ENCODE measurements at regions of chr2 and their contacts with region 1.

Region 1: DNA sequence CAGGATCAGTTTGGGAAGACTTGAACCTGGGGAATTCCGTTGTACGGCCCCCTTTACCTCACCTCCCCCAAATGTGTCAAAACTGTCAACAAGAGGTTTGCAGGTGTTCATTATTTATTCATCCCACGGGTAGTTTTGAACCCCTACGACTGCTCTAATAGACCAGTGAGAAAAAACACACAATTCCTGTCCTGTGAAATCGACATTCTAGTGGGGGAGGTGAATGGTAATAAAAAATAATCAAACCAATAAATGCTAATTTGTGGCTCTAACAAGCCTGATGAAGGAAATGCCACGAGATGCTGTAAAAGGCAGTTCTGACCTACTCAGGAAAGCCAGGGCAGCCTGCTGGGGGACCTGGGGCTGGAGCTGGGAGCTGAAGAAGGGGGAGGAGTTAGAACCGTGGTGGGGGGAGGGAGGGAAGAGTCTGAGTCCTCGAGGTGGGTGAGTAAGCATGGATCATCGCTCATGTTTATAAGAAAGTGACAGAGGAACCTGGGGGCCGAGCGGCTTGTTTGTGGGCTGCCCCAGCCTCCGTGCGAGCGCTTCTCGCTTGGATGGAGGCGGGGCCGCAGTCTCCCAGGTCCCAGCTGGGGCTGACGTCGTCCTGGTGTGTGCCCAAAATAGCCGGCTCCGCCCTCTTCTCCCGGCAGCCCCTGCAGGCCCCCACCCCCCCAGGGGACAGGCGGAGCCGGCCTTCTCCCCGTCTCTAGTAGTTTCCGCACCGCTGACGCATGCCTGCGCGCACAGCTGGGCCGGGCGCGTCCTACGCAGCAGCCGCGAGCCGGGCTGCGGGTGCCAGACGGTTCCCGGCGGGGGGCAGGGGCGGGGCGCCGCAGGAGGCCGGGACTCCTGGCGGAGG is at the start of gene DNAJB2:
- DNase-seq: peak; percentile 99
- ATAC-seq: peak; percentile 78
- H3K4me3 Mint-ChIP-seq: peak within 1 kb of the TSS; percentile 89
- H3K27ac Mint-ChIP-seq: peak within 1 kb of the TSS; percentile 97
- H3K4me1 Mint-ChIP-seq: peaks cover 49% of the 10 kb centered on the region
- H3K27me3 Mint-ChIP-seq: no peaks in the 10 kb centered on the region
- CTCF ChIP-seq: no peak
- total RNA-seq, gene DNAJB2: 59.0 and 71.1 TPM in 2 replicates

Region 2: GRCh38 chr2:218710687-218711549 is 568.0 kb before region 1 on chr2 and contains the start of gene TTLL4:
- CTCF ChIA-PET with region 1: no interaction called
- POLR2A ChIA-PET with region 1: no interaction called
- intact Hi-C with region 1: loop called (anchors 2 kb)
- DNase-seq: peak; percentile 98
- ATAC-seq: peak; percentile 97
- H3K4me3 Mint-ChIP-seq: peak within 1 kb of the TSS; percentile 91
- H3K27ac Mint-ChIP-seq: peak within 1 kb of the TSS; percentile 86
- H3K4me1 Mint-ChIP-seq: peaks cover 26% of the 10 kb centered on the region
- H3K27me3 Mint-ChIP-seq: no peaks in the 10 kb centered on the region
- CTCF ChIP-seq: no peak
- total RNA-seq, gene TTLL4: 36.0 and 37.2 TPM in 2 replicates

Region 3: DNA sequence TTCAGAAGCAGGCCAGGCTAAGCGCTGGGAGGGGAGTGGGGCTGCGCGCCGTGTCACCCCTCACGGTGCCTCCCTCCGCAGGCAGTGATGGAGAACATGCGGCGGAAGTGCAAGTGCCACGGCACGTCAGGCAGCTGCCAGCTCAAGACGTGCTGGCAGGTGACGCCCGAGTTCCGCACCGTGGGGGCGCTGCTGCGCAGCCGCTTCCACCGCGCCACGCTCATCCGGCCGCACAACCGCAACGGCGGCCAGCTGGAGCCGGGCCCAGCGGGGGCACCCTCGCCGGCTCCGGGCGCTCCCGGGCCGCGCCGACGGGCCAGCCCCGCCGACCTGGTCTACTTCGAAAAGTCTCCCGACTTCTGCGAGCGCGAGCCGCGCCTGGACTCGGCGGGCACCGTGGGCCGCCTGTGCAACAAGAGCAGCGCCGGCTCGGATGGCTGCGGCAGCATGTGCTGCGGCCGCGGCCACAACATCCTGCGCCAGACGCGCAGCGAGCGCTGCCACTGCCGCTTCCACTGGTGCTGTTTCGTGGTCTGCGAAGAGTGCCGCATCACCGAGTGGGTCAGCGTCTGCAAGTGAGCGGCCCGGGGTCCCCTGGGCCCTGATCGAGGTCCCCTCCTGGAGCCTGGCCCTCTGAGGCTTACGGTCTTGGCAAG is 386.1 kb before region 1 on chr2:
- CTCF ChIA-PET with region 1: no interaction called
- POLR2A ChIA-PET with region 1: interaction called, 7 read pairs
- intact Hi-C with region 1: loop called (anchors 1 kb)
- DNase-seq: peak; percentile 91
- ATAC-seq: peak; percentile 66
- H3K4me3 Mint-ChIP-seq: peak overlapping the region; percentile 80
- H3K27ac Mint-ChIP-seq: peak overlapping the region; percentile 92
- H3K4me1 Mint-ChIP-seq: peaks cover 59% of the 10 kb centered on the region
- H3K27me3 Mint-ChIP-seq: no peaks in the 10 kb centered on the region
- CTCF ChIP-seq: no peak

Region 4: DNA sequence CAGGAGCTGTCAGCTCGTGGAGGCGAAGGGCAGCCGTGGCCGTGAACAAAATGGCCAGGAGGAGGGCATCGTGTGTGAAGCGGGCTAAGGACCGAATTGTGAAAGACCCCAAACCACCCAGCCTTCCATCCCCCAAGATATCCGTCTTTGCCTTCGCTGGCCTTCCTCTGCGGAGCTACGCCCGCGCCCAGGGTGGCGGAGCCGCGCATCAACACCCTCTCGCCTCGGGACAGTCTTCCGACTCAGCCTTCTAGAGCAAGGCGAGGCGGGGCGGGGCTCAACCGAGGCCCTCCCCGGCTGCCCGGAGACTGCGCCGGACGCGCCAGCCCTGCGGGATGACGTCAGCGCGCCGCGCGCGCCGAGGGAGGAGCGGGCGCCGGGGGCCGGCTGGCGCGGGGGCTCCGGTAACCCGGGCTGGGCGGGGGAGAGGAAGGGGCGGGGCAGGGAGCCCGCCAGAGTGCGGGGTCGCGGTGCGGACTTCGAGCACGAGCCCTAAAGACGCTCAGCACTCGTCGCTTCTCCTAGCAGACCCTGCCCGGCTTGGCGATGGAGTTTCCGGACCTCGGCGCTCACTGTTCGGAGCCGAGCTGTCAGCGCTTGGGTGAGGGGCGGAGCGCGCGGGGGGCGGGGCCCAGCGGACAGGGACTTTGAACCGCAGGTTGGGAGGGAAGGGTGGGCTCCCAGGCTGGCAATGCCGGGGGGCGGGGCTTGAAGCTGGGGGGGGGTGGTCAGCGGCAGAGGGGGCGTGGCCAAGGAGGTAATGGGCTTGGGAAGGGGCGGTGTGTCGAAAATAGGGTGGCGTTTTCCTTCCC is 72.2 kb before region 1 on chr2 and contains the start of gene ZFAND2B:
- CTCF ChIA-PET with region 1: interaction called, 4 read pairs
- POLR2A ChIA-PET with region 1: interaction called, 22 read pairs
- intact Hi-C with region 1: loop called (anchors 1 kb)
- DNase-seq: peak; percentile 99
- ATAC-seq: peak; percentile 93
- H3K4me3 Mint-ChIP-seq: peak within 1 kb of the TSS; percentile 88
- H3K27ac Mint-ChIP-seq: peak within 1 kb of the TSS; percentile 95
- H3K4me1 Mint-ChIP-seq: peaks cover 26% of the 10 kb centered on the region
- H3K27me3 Mint-ChIP-seq: no peaks in the 10 kb centered on the region
- CTCF ChIP-seq: no peak
- total RNA-seq, gene ZFAND2B: 39.9 and 47.2 TPM in 2 replicates

Region 5: GRCh38 chr2:219229305-219230058 is 49.4 kb before region 1 on chr2 and contains the starts of genes ANKZF1 and ATG9A:
- CTCF ChIA-PET with region 1: interaction called, 7 read pairs
- POLR2A ChIA-PET with region 1: interaction called, 57 read pairs
- intact Hi-C with region 1: loop called (anchors 1 kb)
- DNase-seq: peak; percentile 90
- ATAC-seq: peak; percentile 97
- H3K4me3 Mint-ChIP-seq: peak within 1 kb of the TSS; percentile 96
- H3K27ac Mint-ChIP-seq: peak within 1 kb of the TSS; percentile 95
- H3K4me1 Mint-ChIP-seq: peaks cover 43% of the 10 kb centered on the region
- H3K27me3 Mint-ChIP-seq: no peaks in the 10 kb centered on the region
- CTCF ChIP-seq: no peak
- total RNA-seq, gene ANKZF1: 96.0 and 105 TPM in 2 replicates
- total RNA-seq, gene ATG9A: 28.3 and 38.3 TPM in 2 replicates

Region 6: GRCh38 chr2:219253753-219254590 is 24.9 kb before region 1 on chr2 and contains the start of gene TUBA4A:
- CTCF ChIA-PET with region 1: interaction called, 42 read pairs
- POLR2A ChIA-PET with region 1: interaction called, 260 read pairs
- intact Hi-C with region 1: loop called (anchors 1 kb)
- DNase-seq: peak; percentile 90
- ATAC-seq: peak; percentile 69
- H3K4me3 Mint-ChIP-seq: peak within 1 kb of the TSS; percentile 82
- H3K27ac Mint-ChIP-seq: peak within 1 kb of the TSS; percentile 98
- H3K4me1 Mint-ChIP-seq: peaks cover 53% of the 10 kb centered on the region
- H3K27me3 Mint-ChIP-seq: no peaks in the 10 kb centered on the region
- CTCF ChIP-seq: no peak
- total RNA-seq, gene TUBA4A: 184 and 192 TPM in 2 replicates

Region 7: DNA sequence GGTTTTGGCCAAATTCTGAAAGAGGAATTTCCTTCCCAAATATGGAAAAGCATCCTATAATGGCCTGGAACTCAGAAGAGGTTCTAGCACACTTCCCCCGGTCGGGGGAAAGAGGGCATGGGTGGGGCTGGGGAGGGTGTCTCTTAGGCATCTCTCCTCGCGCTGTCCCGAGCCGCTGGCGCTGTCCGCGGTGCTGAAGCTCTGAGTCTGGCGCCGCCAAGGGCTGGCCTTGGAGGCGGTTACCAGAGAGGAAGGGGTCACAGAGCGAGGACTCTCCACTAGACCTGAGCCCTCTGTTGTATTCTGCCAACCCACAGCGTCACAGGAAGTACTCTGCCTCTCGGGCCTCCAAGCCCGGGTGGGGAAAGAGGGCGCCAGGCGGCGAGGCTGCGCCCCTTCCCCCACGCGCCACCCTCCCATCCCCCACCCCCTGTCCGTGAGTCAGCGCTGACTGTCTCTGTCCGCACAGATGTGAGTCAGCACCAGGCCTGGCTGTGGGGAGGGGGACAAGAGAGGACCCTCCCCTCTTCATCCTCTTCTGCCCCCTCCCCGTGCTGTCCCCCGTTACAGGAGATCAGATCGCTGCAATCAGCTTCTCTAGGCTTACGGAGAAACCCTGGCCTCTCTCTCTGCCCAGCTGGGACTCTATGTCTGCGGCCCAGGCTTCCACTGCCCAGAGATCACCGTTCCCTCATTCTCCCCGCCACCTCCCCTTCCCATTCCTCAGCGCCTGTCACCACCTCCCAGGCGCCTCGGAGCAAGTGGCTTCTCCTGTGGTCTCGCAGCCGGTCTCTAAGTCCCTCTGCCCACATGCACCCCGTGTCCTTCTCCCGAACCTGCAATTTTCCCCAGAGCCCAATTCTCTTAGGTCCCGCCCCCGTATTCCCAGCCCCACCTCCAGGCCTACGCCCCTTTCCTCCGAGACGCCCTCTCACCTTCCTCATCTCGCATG is 29.5 kb after region 1 on chr2:
- CTCF ChIA-PET with region 1: no interaction called
- POLR2A ChIA-PET with region 1: no interaction called
- intact Hi-C with region 1: no loop called
- DNase-seq: peak; percentile 61
- ATAC-seq: peak; percentile 77
- H3K4me3 Mint-ChIP-seq: no peak overlapping the region
- H3K27ac Mint-ChIP-seq: no peak overlapping the region
- H3K4me1 Mint-ChIP-seq: peaks cover 3% of the 10 kb centered on the region
- H3K27me3 Mint-ChIP-seq: peaks cover 64% of the 10 kb centered on the region
- CTCF ChIP-seq: no peak

Region 8: GRCh38 chr2:219543601-219544358 is 264.9 kb after region 1 on chr2 and contains the starts of genes CHPF and TMEM198:
- CTCF ChIA-PET with region 1: no interaction called
- POLR2A ChIA-PET with region 1: no interaction called
- intact Hi-C with region 1: loop called (anchors 5 kb)
- DNase-seq: peak; percentile 81
- ATAC-seq: peak; percentile 84
- H3K4me3 Mint-ChIP-seq: peak within 1 kb of the TSS; percentile 78
- H3K27ac Mint-ChIP-seq: no peak within 1 kb of the TSS
- H3K4me1 Mint-ChIP-seq: peaks cover 22% of the 10 kb centered on the region
- H3K27me3 Mint-ChIP-seq: peaks cover 42% of the 10 kb centered on the region
- CTCF ChIP-seq: no peak
- total RNA-seq, gene CHPF: 4.1 and 4.7 TPM in 2 replicates
- total RNA-seq, gene TMEM198: 0.86 and 1.2 TPM in 2 replicates

Measured in activated B cell treated with CpG ODN at 0.5 μM for 24 hours (primary cell).